IMR-90 (cell line): ENCODE measurements at regions of chr15 and their contacts with region 1.

Region 1: GRCh38 chr15:51829360-51830275 is at the start of gene TMOD3:
- DNase-seq: peak; percentile 87
- ATAC-seq: peak; percentile 91
- H3K4me3 ChIP-seq: peak within 1 kb of the TSS; percentile 83
- H3K27ac ChIP-seq: peak within 1 kb of the TSS; percentile 98
- H3K4me1 ChIP-seq: peaks cover 4% of the 10 kb centered on the region
- H3K27me3 ChIP-seq: no peaks in the 10 kb centered on the region
- CTCF ChIP-seq: no peak
- POLR2A ChIP-seq: peak; percentile 50; the same call in 1 of the 2 replicates
- RAD21 ChIP-seq: no peak
- total RNA-seq, gene TMOD3: 22.0 and 51.1 TPM in 2 replicates

Region 2: GRCh38 chr15:51726351-51727073 is 103.1 kb before region 1 on chr15:
- CTCF ChIA-PET with region 1: no interaction called
- POLR2A ChIA-PET with region 1: no interaction called
- dilution Hi-C with region 1: no loop called
- in situ Hi-C with region 1: no loop called
- intact Hi-C with region 1: no loop called
- DNase-seq: peak; percentile 93
- ATAC-seq: peak; percentile 94
- H3K4me3 ChIP-seq: no peak overlapping the region
- H3K27ac ChIP-seq: no peak overlapping the region
- H3K4me1 ChIP-seq: peaks cover 16% of the 10 kb centered on the region
- H3K27me3 ChIP-seq: no peaks in the 10 kb centered on the region
- CTCF ChIP-seq: no peak
- POLR2A ChIP-seq: 0 out of 2 replicates have a peak, but pooled peaks have one; percentile 23
- RAD21 ChIP-seq: no peak

Region 3: GRCh38 chr15:51874751-51875528 is 45.3 kb after region 1 on chr15:
- CTCF ChIA-PET with region 1: no interaction called
- POLR2A ChIA-PET with region 1: no interaction called
- dilution Hi-C with region 1: no loop called
- in situ Hi-C with region 1: no loop called
- intact Hi-C with region 1: loop called (anchors 2 kb)
- DNase-seq: peak; percentile 99
- ATAC-seq: peak; percentile 89
- H3K4me3 ChIP-seq: no peak overlapping the region
- H3K27ac ChIP-seq: peak overlapping the region; percentile 41
- H3K4me1 ChIP-seq: peaks cover 11% of the 10 kb centered on the region; the same call in 1 of the 2 replicates
- H3K27me3 ChIP-seq: no peaks in the 10 kb centered on the region
- CTCF ChIP-seq: no peak
- POLR2A ChIP-seq: no peak
- RAD21 ChIP-seq: 0 out of 2 replicates have a peak, but pooled peaks have one; percentile 5

Region 4: GRCh38 chr15:51883438-51883837 is 53.8 kb after region 1 on chr15:
- CTCF ChIA-PET with region 1: no interaction called
- POLR2A ChIA-PET with region 1: no interaction called
- dilution Hi-C with region 1: no loop called
- in situ Hi-C with region 1: no loop called
- intact Hi-C with region 1: loop called (anchors 1 kb)
- DNase-seq: peak; percentile 75
- ATAC-seq: peak; percentile 83
- H3K4me3 ChIP-seq: no peak overlapping the region
- H3K27ac ChIP-seq: peak overlapping the region; percentile 52; the same call in 1 of the 2 replicates
- H3K4me1 ChIP-seq: peaks cover 16% of the 10 kb centered on the region
- H3K27me3 ChIP-seq: no peaks in the 10 kb centered on the region
- CTCF ChIP-seq: no peak
- POLR2A ChIP-seq: no peak
- RAD21 ChIP-seq: no peak

Region 5: DNA sequence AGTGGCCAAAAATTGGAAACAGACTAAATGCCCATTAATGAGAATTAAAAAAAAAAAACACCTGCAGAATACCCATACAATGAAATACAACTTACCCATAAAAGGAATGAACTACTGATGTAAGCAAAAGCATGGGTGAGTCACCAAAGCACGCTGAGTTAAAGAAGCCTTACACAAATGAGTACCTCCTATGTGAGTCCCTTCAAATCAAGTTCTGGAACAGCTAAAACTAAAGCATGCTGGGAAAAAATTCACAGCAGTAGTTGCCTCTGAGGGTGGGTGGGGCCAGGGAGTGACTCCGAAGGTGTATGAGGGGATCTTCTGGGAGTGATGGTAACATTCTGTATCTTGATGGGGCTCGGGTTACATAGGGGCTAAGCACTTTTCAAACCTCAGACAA is 454.5 kb after region 1 on chr15:
- CTCF ChIA-PET with region 1: no interaction called
- POLR2A ChIA-PET with region 1: no interaction called
- dilution Hi-C with region 1: no loop called
- in situ Hi-C with region 1: no loop called
- intact Hi-C with region 1: no loop called
- DNase-seq: peak; percentile 77
- ATAC-seq: peak; percentile 63
- H3K4me3 ChIP-seq: no peak overlapping the region
- H3K27ac ChIP-seq: no peak overlapping the region
- H3K4me1 ChIP-seq: peaks cover 8% of the 10 kb centered on the region
- H3K27me3 ChIP-seq: peaks cover 24% of the 10 kb centered on the region
- CTCF ChIP-seq: no peak
- POLR2A ChIP-seq: no peak
- RAD21 ChIP-seq: no peak